Naive thymus-derived CD4-positive, alpha-beta T cell (primary cell): ENCODE measurements at regions of chr2 and their contacts with region 1.

Region 1: GRCh38 chr2:42360890-42361727 is at the start of gene COX7A2L:
- DNase-seq: peak; percentile 88 to 97 (median 96)
- ATAC-seq: peak; percentile 98
- H3K4me3 ChIP-seq: peak within 1 kb of the TSS; percentile 82
- H3K4me3 Mint-ChIP-seq: peak within 1 kb of the TSS; percentile 87 to 98 (median 95)
- H3K27ac ChIP-seq: peak within 1 kb of the TSS; percentile 92
- H3K27ac Mint-ChIP-seq: peak within 1 kb of the TSS; percentile 90 to 100 (median 98)
- H3K4me1 ChIP-seq: peaks cover 23 to 24% of the 10 kb centered on the region in 2 donors
- H3K4me1 Mint-ChIP-seq: peaks cover 33 to 56% (median 51%) of the 10 kb centered on the region in 7 donors
- H3K27me3 ChIP-seq: no peaks in the 10 kb centered on the region
- H3K27me3 Mint-ChIP-seq: no peaks in the 10 kb centered on the region
- total RNA-seq, gene COX7A2L: 57.3 to 87.7 (median 81.5) TPM

Region 2: DNA sequence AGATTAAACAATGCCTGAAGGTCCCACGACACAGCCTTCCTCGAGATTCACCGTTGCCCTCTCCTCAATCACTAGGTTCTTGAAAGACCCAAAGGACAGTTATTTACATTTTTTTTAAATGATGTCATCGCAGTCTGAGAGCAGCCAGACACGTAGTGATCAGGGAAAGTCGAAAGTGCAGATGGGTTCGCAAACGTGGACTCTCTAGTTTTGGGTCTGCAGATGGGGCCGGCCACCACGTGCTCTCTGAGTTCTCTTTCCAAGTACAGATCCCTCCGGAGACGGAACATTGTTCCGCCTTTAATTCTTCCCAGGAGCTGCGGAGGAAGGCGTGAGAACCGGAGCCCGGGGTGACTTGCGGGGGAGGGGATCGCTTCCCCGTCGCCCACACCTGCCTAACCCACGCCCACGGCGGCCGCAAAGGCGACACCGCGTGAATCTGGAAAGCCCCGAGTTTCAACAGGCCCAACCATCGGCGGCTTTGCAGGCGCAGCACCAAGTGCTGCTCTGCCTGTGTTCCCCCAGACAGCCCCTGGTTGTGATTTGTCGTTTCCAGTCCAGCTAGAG is 259.0 kb before region 1 on chr2:
- CTCF ChIA-PET with region 1: no interaction called
- POLR2A ChIA-PET with region 1: interaction called, 3 read pairs
- intact Hi-C with region 1: loop called (anchors 1 kb)
- DNase-seq: peak; percentile 87 to 97 (median 94)
- ATAC-seq: peak; percentile 85
- H3K4me3 ChIP-seq: peak overlapping the region; percentile 44
- H3K4me3 Mint-ChIP-seq: peak overlapping the region in 8 of 10 donors; percentile 76 to 91 (median 85)
- H3K27ac ChIP-seq: peak overlapping the region; percentile 95
- H3K27ac Mint-ChIP-seq: peak overlapping the region in 2 of 9 donors; percentile 97 to 99
- H3K4me1 ChIP-seq: peaks cover 74 to 81% of the 10 kb centered on the region in 2 donors
- H3K4me1 Mint-ChIP-seq: peaks cover 37 to 69% (median 50%) of the 10 kb centered on the region in 7 donors
- H3K27me3 ChIP-seq: no peaks in the 10 kb centered on the region
- H3K27me3 Mint-ChIP-seq: no peaks in the 10 kb centered on the region

Region 3: GRCh38 chr2:42286268-42286946 is 74.7 kb before region 1 on chr2:
- CTCF ChIA-PET with region 1: no interaction called
- POLR2A ChIA-PET with region 1: no interaction called
- intact Hi-C with region 1: loop called in 1 of 2 experiments (anchors 2 kb)
- DNase-seq: no peak
- ATAC-seq: no peak
- H3K4me3 ChIP-seq: no peak overlapping the region
- H3K4me3 Mint-ChIP-seq: no peak overlapping the region
- H3K27ac ChIP-seq: no peak overlapping the region
- H3K27ac Mint-ChIP-seq: peak overlapping the region in 8 of 9 donors; percentile 5 to 91 (median 76)
- H3K4me1 ChIP-seq: peaks cover 6 to 8% of the 10 kb centered on the region in 2 donors
- H3K4me1 Mint-ChIP-seq: peaks cover 6 to 41% (median 20%) of the 10 kb centered on the region in 7 donors
- H3K27me3 ChIP-seq: no peaks in the 10 kb centered on the region
- H3K27me3 Mint-ChIP-seq: no peaks in the 10 kb centered on the region

Region 4: DNA sequence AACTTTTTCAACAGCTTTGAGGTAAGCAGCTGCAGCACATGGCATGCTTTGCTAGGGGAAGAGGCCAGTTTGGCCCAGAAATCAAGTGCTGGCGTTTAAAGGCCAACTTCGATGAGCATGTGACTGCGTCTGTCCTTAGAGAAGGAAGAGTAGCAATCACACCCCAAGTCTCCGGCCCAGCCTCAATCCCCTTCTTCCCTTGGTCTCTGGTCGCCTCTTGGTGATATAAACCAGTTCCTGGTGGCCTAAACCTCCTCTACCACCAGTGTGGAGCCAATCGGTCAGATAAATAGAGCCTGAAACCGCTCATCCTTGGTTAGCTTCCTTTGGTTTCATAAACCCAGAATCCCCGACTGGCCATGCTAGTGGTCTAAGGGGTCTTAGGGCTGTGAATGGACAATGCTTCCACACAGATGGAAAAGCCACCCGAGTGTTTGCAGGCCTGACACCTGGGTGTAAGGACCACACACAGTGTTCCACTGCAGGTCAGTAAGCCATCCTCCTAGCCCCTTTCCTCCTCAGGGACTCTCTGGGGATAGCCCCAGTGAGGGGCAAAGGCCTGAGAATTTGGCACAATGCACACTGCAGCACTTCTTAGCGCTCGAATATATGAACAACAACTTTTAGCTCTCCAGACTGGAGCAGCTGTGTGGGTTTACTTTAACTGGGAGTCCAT is 22.9 kb after region 1 on chr2:
- CTCF ChIA-PET with region 1: no interaction called
- POLR2A ChIA-PET with region 1: no interaction called
- intact Hi-C with region 1: no loop called
- DNase-seq: no peak
- ATAC-seq: no peak
- H3K4me3 ChIP-seq: no peak overlapping the region
- H3K4me3 Mint-ChIP-seq: no peak overlapping the region
- H3K27ac ChIP-seq: no peak overlapping the region
- H3K27ac Mint-ChIP-seq: no peak overlapping the region
- H3K4me1 ChIP-seq: no peaks in the 10 kb centered on the region
- H3K4me1 Mint-ChIP-seq: peaks cover 0 to 5% (median 0%) of the 10 kb centered on the region in 7 donors
- H3K27me3 ChIP-seq: no peaks in the 10 kb centered on the region
- H3K27me3 Mint-ChIP-seq: peaks cover 0 to 11% (median 4%) of the 10 kb centered on the region in 5 donors

Region 5: DNA sequence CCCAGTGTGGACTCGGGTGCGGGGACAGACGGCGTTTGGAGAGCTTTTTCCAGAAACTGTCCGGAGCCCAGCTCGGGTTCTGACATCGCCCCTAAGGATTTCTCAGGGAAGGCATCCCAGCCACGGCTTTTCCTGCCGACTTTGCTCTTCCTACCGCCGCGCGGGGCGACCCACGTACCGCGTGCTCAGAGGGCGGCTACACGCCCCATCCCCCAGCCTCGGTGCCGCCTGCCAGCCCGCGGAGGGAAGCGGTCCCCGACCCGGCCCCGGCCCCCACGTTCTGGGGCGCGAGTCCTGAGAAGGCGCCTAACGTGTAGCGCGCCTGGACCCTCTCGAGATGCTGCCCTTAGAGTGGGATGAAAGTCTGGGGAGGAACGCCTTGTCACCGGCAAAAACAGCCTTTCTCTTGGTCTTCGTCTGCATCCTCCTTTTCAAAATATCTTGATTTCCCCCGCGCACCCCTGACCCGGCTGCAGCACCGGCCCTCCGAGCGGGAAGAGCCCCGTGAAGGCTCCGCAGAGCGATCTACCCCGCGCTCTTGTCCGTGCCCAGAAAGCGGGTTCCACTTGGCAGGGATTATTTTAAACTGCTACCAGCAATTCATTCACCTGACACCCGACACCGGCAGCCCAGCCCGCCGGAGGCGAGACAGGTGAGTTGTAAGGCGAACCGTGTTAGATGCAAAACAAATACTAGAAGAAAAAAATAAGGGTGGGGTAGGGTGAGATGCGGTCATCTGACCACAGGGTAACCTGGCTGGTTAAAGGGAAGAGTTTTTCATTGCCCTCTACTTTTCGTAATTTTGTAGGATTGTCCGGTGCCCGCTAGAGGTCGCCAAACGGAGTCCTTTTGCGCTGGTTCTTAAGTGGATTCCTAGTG is 133.5 kb after region 1 on chr2:
- CTCF ChIA-PET with region 1: no interaction called
- POLR2A ChIA-PET with region 1: no interaction called
- intact Hi-C with region 1: loop called (anchors 1 to 2 kb)
- DNase-seq: peak; percentile 60 to 83 (median 77)
- ATAC-seq: peak; percentile 74
- H3K4me3 ChIP-seq: peak overlapping the region; percentile 60
- H3K4me3 Mint-ChIP-seq: peak overlapping the region; percentile 82 to 99 (median 96)
- H3K27ac ChIP-seq: peak overlapping the region; percentile 51
- H3K27ac Mint-ChIP-seq: peak overlapping the region; percentile 37 to 93 (median 83)
- H3K4me1 ChIP-seq: peaks cover 0 to 10% of the 10 kb centered on the region in 2 donors
- H3K4me1 Mint-ChIP-seq: peaks cover 0 to 18% (median 10%) of the 10 kb centered on the region in 7 donors
- H3K27me3 ChIP-seq: no peaks in the 10 kb centered on the region
- H3K27me3 Mint-ChIP-seq: peaks cover 0 to 49% (median 5%) of the 10 kb centered on the region in 5 donors

Region 6: GRCh38 chr2:43595603-43596412 is 1234.7 kb after region 1 on chr2 and contains the start of gene THADA:
- CTCF ChIA-PET with region 1: no interaction called
- POLR2A ChIA-PET with region 1: no interaction called
- intact Hi-C with region 1: loop called (anchors 1 kb)
- DNase-seq: peak; percentile 83 to 94 (median 91)
- ATAC-seq: peak; percentile 98
- H3K4me3 ChIP-seq: peak within 1 kb of the TSS; percentile 79
- H3K4me3 Mint-ChIP-seq: peak within 1 kb of the TSS; percentile 82 to 96 (median 94)
- H3K27ac ChIP-seq: peak within 1 kb of the TSS; percentile 87
- H3K27ac Mint-ChIP-seq: peak within 1 kb of the TSS; percentile 90 to 98 (median 97)
- H3K4me1 ChIP-seq: peaks cover 9 to 13% of the 10 kb centered on the region in 2 donors
- H3K4me1 Mint-ChIP-seq: peaks cover 23 to 48% (median 38%) of the 10 kb centered on the region in 7 donors
- H3K27me3 ChIP-seq: no peaks in the 10 kb centered on the region
- H3K27me3 Mint-ChIP-seq: peaks cover 0 to 6% (median 3%) of the 10 kb centered on the region in 5 donors
- total RNA-seq, gene THADA: 34.1 to 43.0 (median 41.0) TPM

Region 7: GRCh38 chr2:44361330-44362206 is 2000.5 kb after region 1 on chr2 and contains the starts of genes CAMKMT and PREPL:
- CTCF ChIA-PET with region 1: no interaction called
- POLR2A ChIA-PET with region 1: no interaction called
- intact Hi-C with region 1: loop called in 1 of 2 experiments (anchors 10 kb)
- DNase-seq: peak; percentile 95 to 99 (median 99)
- ATAC-seq: peak; percentile 93
- H3K4me3 ChIP-seq: peak within 1 kb of the TSS; percentile 88
- H3K4me3 Mint-ChIP-seq: peak within 1 kb of the TSS; percentile 92 to 100 (median 98)
- H3K27ac ChIP-seq: peak within 1 kb of the TSS; percentile 99
- H3K27ac Mint-ChIP-seq: peak within 1 kb of the TSS; percentile 96 to 100 (median 99)
- H3K4me1 ChIP-seq: peaks cover 16 to 17% of the 10 kb centered on the region in 2 donors
- H3K4me1 Mint-ChIP-seq: peaks cover 22 to 81% (median 61%) of the 10 kb centered on the region in 7 donors
- H3K27me3 ChIP-seq: no peaks in the 10 kb centered on the region
- H3K27me3 Mint-ChIP-seq: peaks cover 0 to 3% (median 0%) of the 10 kb centered on the region in 5 donors
- total RNA-seq, gene CAMKMT: 11.1 to 20.8 (median 18.7) TPM
- total RNA-seq, gene PREPL: 22.0 to 41.9 (median 28.5) TPM